H1 (cell line): ENCODE measurements at regions of chr17 and their contacts with region 1.

Region 1: GRCh38 chr17:18321309-18321708 is 6.2 kb downstream of the SMCR8 start:
- DNase-seq: no peak
- H3K4me3 ChIP-seq: no peak overlapping the region
- H3K27ac ChIP-seq: no peak overlapping the region
- H3K4me1 ChIP-seq: peaks cover 0 to 5% (median under 1%) of the 10 kb centered on the region in 4 experiments; a peak in 2 of 7 replicates
- H3K27me3 ChIP-seq: no peaks in the 10 kb centered on the region
- CTCF ChIP-seq: peak; percentile 37 to 63 (median 57); a peak in 3 of 4 replicates
- EP300 ChIP-seq: no peak
- POLR2A ChIP-seq: no peak
- RAD21 ChIP-seq: peak; percentile 10 to 37; a peak in 2 of 4 replicates

Region 2: GRCh38 chr17:18087610-18088491 is 233.5 kb before region 1 on chr17 and contains the start of gene DRG2:
- CTCF ChIA-PET with region 1: no interaction called
- POLR2A ChIA-PET with region 1: no interaction called
- DNase-seq: peak; percentile 75 to 98
- H3K4me3 ChIP-seq: peak within 1 kb of the TSS; percentile 59 to 93 (median 88)
- H3K27ac ChIP-seq: peak within 1 kb of the TSS; percentile 17
- H3K4me1 ChIP-seq: peaks cover 2 to 3% (median 3%) of the 10 kb centered on the region in 4 experiments; a peak in 4 of 7 replicates
- H3K27me3 ChIP-seq: no peaks in the 10 kb centered on the region
- CTCF ChIP-seq: peak in 2 of 3 experiments; percentile 0 to 14; a peak in 1 of 4 replicates
- EP300 ChIP-seq: peak; percentile 52 to 84; a peak in 2 of 3 replicates
- POLR2A ChIP-seq: peak in 1 of 2 experiments; percentile 48; a peak in 2 of 3 replicates
- RAD21 ChIP-seq: peak in 1 of 2 experiments; percentile 13; a peak in 1 of 4 replicates
- total RNA-seq, gene DRG2: 44.6 and 50.1 TPM in 2 replicates

Region 3: DNA sequence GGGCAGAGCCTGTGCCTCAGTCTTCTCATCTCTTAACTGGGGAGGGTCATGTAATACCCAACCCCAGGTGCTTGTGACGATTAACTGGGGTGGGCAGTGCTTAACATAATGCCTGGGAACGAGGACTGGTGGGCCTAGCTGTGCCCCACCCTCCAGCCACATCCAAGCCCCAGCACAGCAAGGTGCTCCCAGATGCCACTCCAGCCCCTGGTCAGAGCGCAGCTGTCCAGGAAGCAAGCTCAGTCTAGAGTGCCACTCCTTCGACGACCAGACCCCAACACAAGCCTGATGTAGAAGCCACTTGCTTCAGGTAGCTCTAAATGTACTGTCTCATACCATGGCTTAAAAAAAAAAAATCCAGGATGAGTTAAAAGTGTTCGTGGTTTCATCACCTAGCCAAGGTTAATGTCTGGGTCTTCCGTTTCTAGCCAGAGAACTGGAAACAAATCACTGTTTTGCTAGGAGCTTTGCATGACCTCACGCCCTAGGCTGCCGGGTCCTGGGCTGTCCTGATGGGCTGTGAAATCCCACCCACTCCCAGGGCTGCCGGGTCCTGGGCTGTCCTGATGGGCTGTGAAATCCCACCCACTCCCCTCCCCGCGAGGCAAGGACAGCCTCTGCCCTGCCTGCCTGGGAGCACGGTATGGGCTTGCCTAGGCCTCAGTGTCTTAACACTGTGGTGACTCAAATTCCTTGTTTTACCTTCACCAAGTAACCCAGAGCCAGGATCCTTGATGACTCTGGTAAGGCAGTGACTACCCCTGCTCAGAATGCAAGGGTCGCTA is 53.2 kb before region 1 on chr17:
- CTCF ChIA-PET with region 1: interaction called, 4 read pairs
- POLR2A ChIA-PET with region 1: interaction called, 10 read pairs
- DNase-seq: no peak
- H3K4me3 ChIP-seq: no peak overlapping the region
- H3K27ac ChIP-seq: no peak overlapping the region
- H3K4me1 ChIP-seq: peaks cover 0 to 10% (median 2%) of the 10 kb centered on the region in 4 experiments; a peak in 4 of 7 replicates
- H3K27me3 ChIP-seq: no peaks in the 10 kb centered on the region
- CTCF ChIP-seq: no peak
- EP300 ChIP-seq: no peak
- POLR2A ChIP-seq: no peak; a peak in 1 of 3 replicates
- RAD21 ChIP-seq: no peak

Region 4: GRCh38 chr17:18291718-18292540 is 29.4 kb before region 1 on chr17:
- CTCF ChIA-PET with region 1: interaction called, 12 read pairs
- POLR2A ChIA-PET with region 1: interaction called, 3 read pairs
- DNase-seq: no peak
- H3K4me3 ChIP-seq: no peak overlapping the region
- H3K27ac ChIP-seq: no peak overlapping the region
- H3K4me1 ChIP-seq: no peaks in the 10 kb centered on the region
- H3K27me3 ChIP-seq: no peaks in the 10 kb centered on the region
- CTCF ChIP-seq: no peak
- EP300 ChIP-seq: no peak
- POLR2A ChIP-seq: no peak
- RAD21 ChIP-seq: no peak